Naive thymus-derived CD4-positive, alpha-beta T cell (primary cell): ENCODE measurements at regions of chr18 and their contacts with region 1.

Region 1: GRCh38 chr18:30177056-30177455 is 865.5 kb downstream of the DSC3 start:
- DNase-seq: no peak
- ATAC-seq: no peak
- H3K4me3 ChIP-seq: no peak overlapping the region
- H3K4me3 Mint-ChIP-seq: no peak overlapping the region
- H3K27ac ChIP-seq: no peak overlapping the region
- H3K27ac Mint-ChIP-seq: no peak overlapping the region
- H3K4me1 ChIP-seq: no peaks in the 10 kb centered on the region
- H3K4me1 Mint-ChIP-seq: no peaks in the 10 kb centered on the region
- H3K27me3 ChIP-seq: no peaks in the 10 kb centered on the region
- H3K27me3 Mint-ChIP-seq: no peaks in the 10 kb centered on the region

Region 2: GRCh38 chr18:30234755-30235154 is 57.7 kb after region 1 on chr18:
- CTCF ChIA-PET with region 1: no interaction called
- POLR2A ChIA-PET with region 1: no interaction called
- intact Hi-C with region 1: loop called in 1 of 2 experiments (anchors 5 kb)
- DNase-seq: no peak
- ATAC-seq: no peak
- H3K4me3 ChIP-seq: no peak overlapping the region
- H3K4me3 Mint-ChIP-seq: no peak overlapping the region
- H3K27ac ChIP-seq: no peak overlapping the region
- H3K27ac Mint-ChIP-seq: no peak overlapping the region
- H3K4me1 ChIP-seq: no peaks in the 10 kb centered on the region
- H3K4me1 Mint-ChIP-seq: no peaks in the 10 kb centered on the region
- H3K27me3 ChIP-seq: no peaks in the 10 kb centered on the region
- H3K27me3 Mint-ChIP-seq: no peaks in the 10 kb centered on the region